A673 (cell line): ENCODE measurements at regions of chr16 and their contacts with region 1.

Region 1: GRCh38 chr16:31265329-31266245 is 5.8 kb downstream of the ITGAM start:
- DNase-seq: peak; percentile 15
- H3K4me3 ChIP-seq: no peak overlapping the region
- H3K27ac ChIP-seq: no peak overlapping the region
- H3K4me1 ChIP-seq: no peaks in the 10 kb centered on the region
- H3K27me3 ChIP-seq: no peaks in the 10 kb centered on the region
- CTCF ChIP-seq: no peak

Region 2: GRCh38 chr16:31333686-31334649 is 68.4 kb after region 1 on chr16:
- CTCF ChIA-PET with region 1: no interaction called
- POLR2A ChIA-PET with region 1: no interaction called
- intact Hi-C with region 1: loop called (anchors 10 kb)
- DNase-seq: peak; percentile 25
- H3K4me3 ChIP-seq: no peak overlapping the region
- H3K27ac ChIP-seq: no peak overlapping the region
- H3K4me1 ChIP-seq: no peaks in the 10 kb centered on the region
- H3K27me3 ChIP-seq: peaks cover 39% of the 10 kb centered on the region
- CTCF ChIP-seq: peak; percentile 48